Activated T-helper 2 cell treated with anti-CD3 and anti-CD28 coated beads, Interferon-gamma antibody, Interleukin-2, Interleukin-4, amounts not matched to agents 10 μg/mL and 5 μg/mL and 100 μg/mL, durations not matched to agents 14 hours and 24 hours and 36 hours (primary cell): ENCODE measurements at regions of chr11 and their contacts with region 1.

Region 1: DNA sequence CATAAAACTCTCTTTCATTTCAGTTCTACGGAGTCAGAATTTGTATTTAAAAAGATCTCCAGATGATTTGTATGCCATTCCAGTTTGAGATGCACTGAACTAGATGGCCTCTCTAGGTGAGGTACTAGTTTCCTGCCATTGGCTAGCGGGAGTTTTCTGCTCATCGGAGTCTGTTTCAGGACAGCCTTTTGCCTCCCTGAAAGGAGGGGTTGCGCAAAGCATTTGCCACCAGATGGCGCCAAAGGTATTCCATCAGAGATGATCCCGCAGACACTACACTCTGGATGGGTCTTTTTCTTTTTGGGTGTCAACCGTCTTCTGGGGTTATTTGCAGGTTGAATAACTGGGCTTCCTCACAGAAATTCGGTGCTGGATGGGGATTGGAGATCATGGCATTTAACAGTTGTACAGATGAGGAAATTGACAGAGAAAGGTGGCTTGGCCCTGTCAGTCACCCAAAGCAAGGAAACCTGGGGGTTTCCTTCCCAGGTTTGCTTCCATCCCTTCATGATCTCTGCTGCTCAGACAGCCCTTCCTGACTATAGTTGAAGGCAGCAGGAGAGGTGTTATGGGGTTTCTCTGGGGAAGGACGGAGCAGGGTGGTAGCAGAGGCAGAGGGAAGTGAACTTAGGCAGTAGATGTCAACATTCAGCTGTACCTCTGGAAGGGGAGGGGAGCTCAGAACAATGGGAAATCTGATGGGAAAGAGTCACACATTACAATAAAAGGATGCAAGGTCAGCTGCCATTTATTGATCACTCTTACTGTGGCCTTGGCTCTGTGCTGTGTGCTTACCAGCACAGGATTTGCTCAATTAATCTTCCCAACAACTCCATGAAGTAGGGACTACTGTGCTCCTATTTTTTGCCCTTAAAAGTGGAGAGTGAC is 81.6 kb downstream of the CCDC81 start:
- DNase-seq: peak; percentile 56
- H3K4me3 Mint-ChIP-seq: no peak overlapping the region
- H3K27ac Mint-ChIP-seq: no peak overlapping the region
- H3K4me1 Mint-ChIP-seq: peaks cover 27% of the 10 kb centered on the region
- H3K27me3 Mint-ChIP-seq: no peaks in the 10 kb centered on the region

Region 2: DNA sequence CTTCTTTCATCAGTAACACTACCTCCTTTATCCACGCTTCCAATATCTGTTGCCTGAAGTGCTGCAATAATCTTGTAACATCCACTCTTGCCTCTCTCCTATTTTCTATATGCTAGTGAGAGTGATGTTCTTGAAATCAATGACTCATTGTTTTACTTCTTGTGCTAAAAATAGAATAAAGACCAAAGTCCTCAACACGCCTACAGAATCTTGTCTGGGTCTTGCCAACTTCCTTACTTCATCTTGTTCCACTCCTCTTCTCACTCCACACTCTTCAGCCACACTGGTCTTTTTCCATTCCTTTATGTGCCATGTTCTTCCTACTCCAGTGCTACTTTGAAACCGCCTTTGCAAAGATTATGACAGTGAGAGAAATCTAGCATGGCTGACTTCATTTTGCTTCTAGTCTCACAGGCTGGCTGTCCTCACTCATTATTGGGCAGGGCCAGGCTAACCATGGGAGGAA is 54.8 kb after region 1 on chr11:
- intact Hi-C with region 1: loop called (anchors 2 kb)
- DNase-seq: no peak
- H3K4me3 Mint-ChIP-seq: no peak overlapping the region
- H3K27ac Mint-ChIP-seq: no peak overlapping the region
- H3K4me1 Mint-ChIP-seq: no peaks in the 10 kb centered on the region
- H3K27me3 Mint-ChIP-seq: peaks cover under 1% of the 10 kb centered on the region

Region 3: DNA sequence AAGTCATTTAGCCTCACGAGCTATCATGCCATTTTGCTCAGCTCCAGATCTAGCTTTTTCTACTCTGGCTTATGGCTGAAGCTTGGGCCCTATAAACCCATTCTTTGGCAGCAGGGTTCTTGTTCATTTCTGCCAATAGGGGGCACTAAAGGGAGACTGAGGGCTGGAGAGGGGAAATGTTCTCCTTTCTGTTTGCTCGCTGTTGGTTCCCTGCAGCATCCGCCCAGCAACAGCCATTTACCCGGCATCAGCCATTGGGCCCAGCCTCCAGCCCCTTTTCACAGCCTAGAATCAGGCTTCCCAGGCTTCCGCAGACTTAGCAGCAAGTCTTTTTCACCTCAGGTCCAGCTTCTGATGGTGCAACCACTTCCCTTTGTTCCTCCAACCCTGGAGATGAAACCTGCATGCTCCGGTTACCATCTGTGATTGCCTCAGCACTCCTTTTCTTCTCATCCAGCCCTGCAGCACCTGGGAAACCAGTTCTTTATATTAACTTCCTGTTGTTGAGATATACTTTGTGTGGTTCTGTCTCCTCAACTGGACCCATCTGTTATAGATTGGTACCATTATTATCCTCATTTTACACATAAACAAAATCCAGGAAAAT is 220.4 kb after region 1 on chr11:
- intact Hi-C with region 1: loop called (anchors 5 kb)
- DNase-seq: no peak
- H3K4me3 Mint-ChIP-seq: no peak overlapping the region
- H3K27ac Mint-ChIP-seq: no peak overlapping the region
- H3K4me1 Mint-ChIP-seq: peaks cover 5% of the 10 kb centered on the region
- H3K27me3 Mint-ChIP-seq: peaks cover 5% of the 10 kb centered on the region

Region 4: DNA sequence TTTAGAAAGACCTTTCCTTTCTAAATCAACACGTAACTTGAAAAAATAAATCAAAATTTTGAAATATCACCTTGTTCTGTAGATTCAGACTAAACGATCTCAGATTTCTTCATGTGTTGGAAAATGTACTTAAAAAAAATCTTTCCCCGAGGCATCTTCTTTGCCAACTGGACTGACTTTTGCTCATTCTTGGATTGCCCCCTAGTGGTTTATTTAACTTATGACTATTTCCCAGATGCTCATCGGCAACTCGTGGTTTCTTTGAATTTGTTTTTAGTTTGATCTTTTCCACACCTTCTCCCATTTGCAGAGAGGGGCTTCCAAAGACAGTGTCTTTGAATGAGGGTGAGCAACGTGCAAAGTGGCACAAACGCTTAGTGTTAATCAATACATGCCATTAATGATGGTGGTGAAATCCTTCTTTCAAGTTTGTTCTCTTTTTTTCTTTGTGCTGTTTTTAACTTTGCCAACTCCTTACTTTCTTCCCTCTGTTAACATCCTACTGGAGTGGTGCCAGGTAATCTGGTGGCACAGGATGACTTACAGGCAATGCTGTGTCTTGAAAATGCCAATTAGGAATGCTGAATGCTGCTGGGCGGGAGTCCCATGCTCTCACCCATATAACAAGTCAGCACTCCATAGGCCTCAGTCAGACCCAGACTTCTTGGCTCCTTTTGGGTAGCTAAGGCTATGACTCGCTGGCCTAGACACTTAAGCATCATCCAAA is 362.3 kb after region 1 on chr11:
- intact Hi-C with region 1: loop called (anchors 1 kb)
- DNase-seq: no peak
- H3K4me3 Mint-ChIP-seq: no peak overlapping the region
- H3K27ac Mint-ChIP-seq: no peak overlapping the region
- H3K4me1 Mint-ChIP-seq: no peaks in the 10 kb centered on the region
- H3K27me3 Mint-ChIP-seq: peaks cover 20% of the 10 kb centered on the region